Activated CD8-positive, alpha-beta T cell treated with anti-CD3 and anti-CD28 coated beads for 36 hours (primary cell): ENCODE measurements at regions of chr1 and their contacts with region 1.

Region 1: GRCh38 chr1:119827010-119827409 is 15.8 kb upstream of the REG4 start:
- DNase-seq: no peak
- ATAC-seq: no peak
- H3K4me3 Mint-ChIP-seq: no peak overlapping the region
- H3K27ac Mint-ChIP-seq: no peak overlapping the region
- H3K4me1 Mint-ChIP-seq: no peaks in the 10 kb centered on the region
- H3K27me3 Mint-ChIP-seq: peaks cover 10% of the 10 kb centered on the region
- CTCF ChIP-seq: peak; percentile 53

Region 2: GRCh38 chr1:119816407-119816806 is 10.6 kb before region 1 on chr1:
- CTCF ChIA-PET with region 1: interaction called, 13 read pairs
- POLR2A ChIA-PET with region 1: no interaction called
- intact Hi-C with region 1: no loop called
- DNase-seq: no peak
- ATAC-seq: no peak
- H3K4me3 Mint-ChIP-seq: no peak overlapping the region
- H3K27ac Mint-ChIP-seq: no peak overlapping the region
- H3K4me1 Mint-ChIP-seq: no peaks in the 10 kb centered on the region
- H3K27me3 Mint-ChIP-seq: peaks cover 6% of the 10 kb centered on the region
- CTCF ChIP-seq: no peak